Activated CD4-positive, alpha-beta T cell treated with anti-CD3 and anti-CD28 coated beads for 36 hours (primary cell): ENCODE measurements at regions of chr12 and their contacts with region 1.

Region 1: GRCh38 chr12:94262228-94263010 is 114.0 kb downstream of the PLXNC1 start:
- DNase-seq: peak; percentile 87
- ATAC-seq: peak; percentile 83
- H3K4me3 Mint-ChIP-seq: peak overlapping the region; percentile 81
- H3K27ac Mint-ChIP-seq: peak overlapping the region; percentile 99
- H3K4me1 Mint-ChIP-seq: peaks cover 44% of the 10 kb centered on the region
- H3K27me3 Mint-ChIP-seq: no peaks in the 10 kb centered on the region

Region 2: GRCh38 chr12:93467351-93468007 is 794.9 kb before region 1 on chr12 and contains the start of gene MRPL42:
- CTCF ChIA-PET with region 1: no interaction called
- POLR2A ChIA-PET with region 1: no interaction called
- intact Hi-C with region 1: loop called in 1 of 2 experiments (anchors 10 kb)
- DNase-seq: peak; percentile 95
- ATAC-seq: peak; percentile 91
- H3K4me3 Mint-ChIP-seq: peak within 1 kb of the TSS; percentile 95
- H3K27ac Mint-ChIP-seq: peak within 1 kb of the TSS; percentile 93
- H3K4me1 Mint-ChIP-seq: peaks cover 29% of the 10 kb centered on the region
- H3K27me3 Mint-ChIP-seq: no peaks in the 10 kb centered on the region
- total RNA-seq, gene MRPL42: 78.7 to 98.3 TPM

Region 3: DNA sequence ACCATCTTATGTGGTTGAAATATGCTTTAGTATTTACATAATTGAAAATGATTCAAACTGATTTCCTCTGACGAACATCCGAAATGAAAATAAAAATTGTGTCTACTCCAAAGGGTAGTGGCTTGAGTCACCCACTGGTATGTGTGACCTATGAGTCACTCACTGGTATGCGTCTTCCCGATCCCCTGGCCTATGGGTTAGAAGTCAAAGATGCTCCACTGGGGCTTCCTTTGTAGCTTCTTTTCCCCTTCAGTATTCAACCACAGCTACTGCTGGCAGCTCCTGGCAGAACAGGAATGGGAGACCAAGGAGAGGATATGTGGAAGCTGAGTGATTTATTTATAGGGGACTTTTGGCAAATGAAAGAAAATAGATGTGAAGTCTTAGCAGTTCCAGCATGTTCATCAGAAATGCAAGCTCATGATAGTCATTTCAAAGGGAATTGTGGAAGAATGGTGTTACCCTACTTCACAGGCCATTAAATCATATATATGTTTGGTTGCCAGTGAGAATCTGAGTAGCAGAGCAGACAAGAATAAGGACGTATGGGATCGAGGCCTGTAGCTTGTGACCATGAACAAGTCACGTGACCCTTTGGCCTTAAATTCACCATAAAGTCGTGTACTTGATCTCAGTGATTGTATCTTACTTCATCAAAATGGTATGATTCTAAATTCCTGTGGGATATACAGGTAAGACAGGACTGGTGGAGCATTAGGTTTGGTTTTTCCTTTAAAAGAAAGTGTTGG is 477.0 kb before region 1 on chr12:
- CTCF ChIA-PET with region 1: no interaction called
- POLR2A ChIA-PET with region 1: no interaction called
- intact Hi-C with region 1: loop called in 1 of 2 experiments (anchors 2 kb)
- DNase-seq: peak; percentile 72
- ATAC-seq: peak; percentile 76
- H3K4me3 Mint-ChIP-seq: peak overlapping the region; percentile 20
- H3K27ac Mint-ChIP-seq: peak overlapping the region; percentile 87
- H3K4me1 Mint-ChIP-seq: peaks cover 70% of the 10 kb centered on the region
- H3K27me3 Mint-ChIP-seq: no peaks in the 10 kb centered on the region

Region 4: GRCh38 chr12:94250130-94250529 is 12.3 kb before region 1 on chr12:
- CTCF ChIA-PET with region 1: no interaction called
- POLR2A ChIA-PET with region 1: no interaction called
- intact Hi-C with region 1: no loop called
- DNase-seq: no peak
- ATAC-seq: no peak
- H3K4me3 Mint-ChIP-seq: no peak overlapping the region
- H3K27ac Mint-ChIP-seq: no peak overlapping the region
- H3K4me1 Mint-ChIP-seq: peaks cover 10% of the 10 kb centered on the region
- H3K27me3 Mint-ChIP-seq: no peaks in the 10 kb centered on the region

Region 5: DNA sequence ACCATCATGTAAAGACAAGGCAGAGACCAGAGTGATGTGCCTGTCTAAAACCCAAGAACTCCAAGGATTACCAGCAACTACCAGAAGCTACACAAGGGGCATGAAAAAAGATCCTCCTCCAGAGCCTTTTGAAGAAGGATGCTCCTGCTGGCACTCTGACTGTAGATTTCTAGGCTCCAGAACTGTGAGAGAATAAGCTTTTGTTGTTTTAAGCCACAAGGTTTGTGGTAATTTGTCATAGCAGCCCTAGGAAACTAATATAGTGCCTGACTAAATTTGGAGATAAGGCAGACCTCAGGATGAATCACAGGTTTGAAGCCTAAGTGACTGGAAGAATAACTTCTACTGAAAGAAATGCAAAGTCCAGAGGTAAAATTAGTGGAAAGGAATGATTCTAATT is 64.3 kb after region 1 on chr12:
- CTCF ChIA-PET with region 1: interaction called, 3 read pairs
- POLR2A ChIA-PET with region 1: no interaction called
- intact Hi-C with region 1: loop called in 1 of 2 experiments (anchors 5 kb)
- DNase-seq: no peak
- ATAC-seq: peak; percentile 86
- H3K4me3 Mint-ChIP-seq: no peak overlapping the region
- H3K27ac Mint-ChIP-seq: no peak overlapping the region
- H3K4me1 Mint-ChIP-seq: peaks cover 19% of the 10 kb centered on the region
- H3K27me3 Mint-ChIP-seq: no peaks in the 10 kb centered on the region

Region 6: GRCh38 chr12:94435511-94435927 is 173.1 kb after region 1 on chr12:
- CTCF ChIA-PET with region 1: no interaction called
- POLR2A ChIA-PET with region 1: no interaction called
- intact Hi-C with region 1: loop called in 1 of 2 experiments (anchors 5 kb)
- DNase-seq: no peak
- ATAC-seq: peak; percentile 19
- H3K4me3 Mint-ChIP-seq: no peak overlapping the region
- H3K27ac Mint-ChIP-seq: no peak overlapping the region
- H3K4me1 Mint-ChIP-seq: peaks cover 26% of the 10 kb centered on the region
- H3K27me3 Mint-ChIP-seq: no peaks in the 10 kb centered on the region

Region 7: DNA sequence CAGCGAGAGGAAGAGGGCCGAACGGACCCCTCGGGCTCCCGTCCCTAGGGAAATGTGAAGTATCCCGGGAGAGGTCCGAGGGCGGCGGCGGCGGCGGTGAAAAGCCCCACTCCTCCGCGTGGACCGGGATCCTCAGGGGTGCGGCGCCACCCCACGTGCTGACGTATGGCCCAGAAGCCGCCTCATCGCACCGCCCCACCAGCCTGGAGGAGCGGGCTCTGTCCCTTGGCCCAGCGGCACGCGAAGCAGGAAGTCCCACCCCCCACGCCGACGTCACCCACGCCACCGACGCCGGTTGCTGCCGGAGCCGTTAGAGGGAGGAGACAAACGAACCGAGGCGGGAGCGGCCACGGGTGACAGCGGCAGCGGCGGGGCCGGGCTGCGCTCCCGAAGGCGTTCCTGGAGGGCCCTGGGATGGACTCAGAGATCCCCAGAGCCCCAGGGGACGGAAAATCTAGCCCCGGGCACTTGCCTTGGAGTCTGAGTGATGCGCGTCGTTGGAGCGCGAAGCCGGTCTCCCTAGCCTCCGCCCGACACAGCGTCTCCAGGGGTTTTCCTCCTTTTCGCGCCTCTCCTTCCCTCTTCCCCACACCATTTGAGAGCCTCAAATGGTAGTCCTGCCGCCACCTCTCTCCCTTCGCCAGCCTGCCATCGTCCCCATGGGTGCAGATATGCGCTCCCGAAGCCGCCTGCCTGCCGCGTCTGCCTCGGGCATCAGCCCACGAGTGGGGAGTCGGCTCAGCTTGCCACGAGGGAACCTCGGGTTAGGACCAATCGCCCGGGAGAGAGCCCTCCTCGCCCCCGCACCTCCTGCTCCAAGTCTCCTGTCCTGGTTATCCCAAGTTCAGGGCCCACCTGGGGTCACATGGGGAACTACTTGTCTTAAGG is 197.6 kb after region 1 on chr12 and contains the start of gene CEP83:
- CTCF ChIA-PET with region 1: no interaction called
- POLR2A ChIA-PET with region 1: interaction called, 4 read pairs
- intact Hi-C with region 1: loop called (anchors 2 kb)
- DNase-seq: peak; percentile 98
- ATAC-seq: peak; percentile 99
- H3K4me3 Mint-ChIP-seq: peak within 1 kb of the TSS; percentile 96
- H3K27ac Mint-ChIP-seq: peak within 1 kb of the TSS; percentile 95
- H3K4me1 Mint-ChIP-seq: peaks cover 30% of the 10 kb centered on the region
- H3K27me3 Mint-ChIP-seq: peaks cover 10% of the 10 kb centered on the region
- total RNA-seq, gene CEP83: 21.9 to 22.6 TPM